Posterior cingulate gyrus (tissue), 11 donors: ENCODE measurements at regions of chr7 and their contacts with region 1.

Region 1: GRCh38 chr7:1123715-1124114 is 35.8 kb downstream of the GPER1 start:
- DNase-seq: peak; percentile 56 to 95 (median 73)

Region 2: GRCh38 chr7:1086588-1087464 is 36.9 kb before region 1 on chr7:
- intact Hi-C with region 1: loop called (anchors 5 kb)
- DNase-seq: peak in 7 of 10 donors; percentile 40 to 93 (median 69)